Esophagus squamous epithelium (tissue), 5 donors: ENCODE measurements at regions of chr12 and their contacts with region 1.

Region 1: DNA sequence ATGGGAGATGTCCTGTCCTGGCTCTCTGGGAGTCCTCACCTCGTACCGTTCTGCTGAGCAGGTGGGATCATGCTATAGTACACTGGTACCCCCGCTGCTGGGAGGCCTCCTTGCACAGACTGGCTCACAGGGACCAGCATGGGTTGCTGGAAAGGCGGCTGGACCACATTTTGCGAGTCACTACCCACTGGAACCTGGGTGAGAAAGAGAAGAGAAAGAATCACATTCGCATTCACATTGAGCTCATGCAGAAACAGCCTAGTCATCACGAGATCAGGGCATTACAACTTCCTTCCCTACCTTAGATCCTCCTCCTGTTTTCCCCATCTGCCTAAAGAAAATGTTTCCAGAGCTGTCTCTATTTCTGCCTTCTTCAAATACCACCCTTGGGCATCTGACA is 17.3 kb upstream of the STAC3 start:
- DNase-seq: no peak
- H3K4me3 ChIP-seq: no peak overlapping the region
- H3K27ac ChIP-seq: no peak overlapping the region
- H3K4me1 ChIP-seq: no peaks in the 10 kb centered on the region
- H3K27me3 ChIP-seq: no peaks in the 10 kb centered on the region
- CTCF ChIP-seq: no peak
- POLR2A ChIP-seq: no peak

Region 2: GRCh38 chr12:57452937-57453509 is 184.8 kb after region 1 on chr12:
- intact Hi-C with region 1: loop called (anchors 5 kb)
- DNase-seq: no peak
- H3K4me3 ChIP-seq: no peak overlapping the region
- H3K27ac ChIP-seq: peak overlapping the region in 1 of 4 donors; percentile 44
- H3K4me1 ChIP-seq: peaks cover 0 to 19% (median 0%) of the 10 kb centered on the region in 3 donors
- H3K27me3 ChIP-seq: peaks cover 0 to 34% (median 0%) of the 10 kb centered on the region in 4 donors
- CTCF ChIP-seq: peak; percentile 62 to 92 (median 88)
- POLR2A ChIP-seq: no peak

Region 3: DNA sequence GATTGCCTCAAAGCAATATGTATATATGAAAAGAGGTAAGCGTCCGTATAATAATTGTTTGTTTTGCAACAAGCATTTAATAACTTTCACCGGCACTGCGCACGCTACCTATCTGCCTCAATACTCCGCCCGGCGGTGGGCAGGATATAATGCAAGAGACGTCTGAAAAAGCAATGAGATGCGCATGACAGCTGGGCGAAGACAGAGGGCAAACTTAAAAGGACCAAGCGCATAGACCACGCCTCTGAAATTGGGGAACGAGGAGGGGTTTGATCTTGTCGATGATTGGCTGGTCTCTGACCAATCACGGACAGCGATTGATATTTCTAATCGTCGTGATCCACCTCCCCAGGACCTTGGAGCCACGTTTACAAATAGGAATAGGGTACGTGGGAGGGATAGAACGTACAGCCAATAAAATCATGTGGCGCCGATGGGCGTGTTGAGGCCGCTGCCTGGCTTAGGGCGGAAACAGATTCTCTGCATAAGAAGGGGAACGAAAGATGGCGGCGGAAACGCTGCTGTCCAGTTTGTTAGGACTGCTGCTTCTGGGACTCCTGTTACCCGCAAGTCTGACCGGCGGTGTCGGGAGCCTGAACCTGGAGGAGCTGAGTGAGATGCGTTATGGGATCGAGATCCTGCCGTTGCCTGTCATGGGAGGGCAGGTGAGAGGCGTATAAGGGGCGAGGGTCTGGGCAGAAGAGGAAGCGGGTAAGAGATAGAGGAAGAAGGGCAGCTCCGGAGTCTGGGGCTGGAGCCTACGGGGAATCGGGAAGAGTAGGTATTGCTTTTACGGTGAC is 425.6 kb after region 1 on chr12 and contains the start of gene OS9:
- intact Hi-C with region 1: no loop called
- DNase-seq: peak; percentile 92
- H3K4me3 ChIP-seq: peak within 1 kb of the TSS; percentile 77 to 96 (median 84)
- H3K27ac ChIP-seq: peak within 1 kb of the TSS; percentile 85 to 91 (median 88)
- H3K4me1 ChIP-seq: peaks cover 5 to 21% (median 11%) of the 10 kb centered on the region in 3 donors
- H3K27me3 ChIP-seq: peaks cover 0 to 3% (median 0%) of the 10 kb centered on the region in 4 donors
- CTCF ChIP-seq: peak; percentile 66 to 93 (median 88)
- POLR2A ChIP-seq: peak in 3 of 4 donors; percentile 24 to 81 (median 81)
- total RNA-seq, gene OS9: 151 to 231 (median 168) TPM